ENCODE measurements at regions of chr7 and their contacts with region 1.

Region 1: DNA sequence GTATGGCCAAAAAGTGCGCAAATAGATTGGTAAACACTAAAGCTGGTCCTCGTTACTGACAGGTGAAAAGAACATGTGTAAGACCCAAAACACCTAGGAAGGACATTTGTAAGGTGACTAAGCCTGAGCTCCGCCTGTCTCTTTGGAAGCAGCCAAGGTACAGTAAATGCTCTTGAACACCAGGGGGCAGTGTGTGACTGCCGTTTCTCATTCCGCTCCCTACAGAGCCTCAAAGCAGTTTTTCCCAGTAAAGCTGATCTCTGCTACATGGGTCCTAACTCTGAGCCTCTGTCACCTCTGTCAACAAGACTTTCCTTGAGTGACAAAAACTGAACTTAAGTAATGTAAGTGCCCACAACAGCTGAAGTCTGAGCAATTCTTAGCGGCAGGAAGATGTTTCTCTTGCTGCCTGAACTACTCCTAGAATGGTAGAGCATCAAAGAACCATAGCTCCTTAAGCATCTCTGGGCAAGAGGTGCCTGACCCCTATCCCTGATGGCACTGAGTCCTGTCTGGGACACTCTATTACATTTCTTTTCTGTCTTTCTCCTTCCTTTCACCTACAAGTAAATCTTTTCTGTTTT is 238.0 kb upstream of the INHBA start:
- DNase-seq: peak; percentile 73
- H3K4me3 ChIP-seq: no peak overlapping the region
- H3K27ac ChIP-seq: no peak overlapping the region
- H3K4me1 ChIP-seq: peaks cover 0 to 3% of the 10 kb centered on the region in 2 experiments; a peak in 1 of 4 replicates
- H3K27me3 ChIP-seq: no peaks in the 10 kb centered on the region
- CTCF ChIP-seq: peak; percentile 99
- EP300 ChIP-seq: no peak
- RAD21 ChIP-seq: peak; percentile 82

Region 2: GRCh38 chr7:41916450-41916959 is 24.3 kb before region 1 on chr7:
- CTCF ChIA-PET with region 1: interaction called, 20 read pairs
- POLR2A ChIA-PET with region 1: no interaction called
- DNase-seq: no peak
- H3K4me3 ChIP-seq: no peak overlapping the region
- H3K27ac ChIP-seq: peak overlapping the region; percentile 92 to 98
- H3K4me1 ChIP-seq: peaks cover 6 to 49% of the 10 kb centered on the region in 2 experiments
- H3K27me3 ChIP-seq: no peaks in the 10 kb centered on the region
- CTCF ChIP-seq: no peak
- EP300 ChIP-seq: peak; percentile 79 to 100
- RAD21 ChIP-seq: no peak

Region 3: DNA sequence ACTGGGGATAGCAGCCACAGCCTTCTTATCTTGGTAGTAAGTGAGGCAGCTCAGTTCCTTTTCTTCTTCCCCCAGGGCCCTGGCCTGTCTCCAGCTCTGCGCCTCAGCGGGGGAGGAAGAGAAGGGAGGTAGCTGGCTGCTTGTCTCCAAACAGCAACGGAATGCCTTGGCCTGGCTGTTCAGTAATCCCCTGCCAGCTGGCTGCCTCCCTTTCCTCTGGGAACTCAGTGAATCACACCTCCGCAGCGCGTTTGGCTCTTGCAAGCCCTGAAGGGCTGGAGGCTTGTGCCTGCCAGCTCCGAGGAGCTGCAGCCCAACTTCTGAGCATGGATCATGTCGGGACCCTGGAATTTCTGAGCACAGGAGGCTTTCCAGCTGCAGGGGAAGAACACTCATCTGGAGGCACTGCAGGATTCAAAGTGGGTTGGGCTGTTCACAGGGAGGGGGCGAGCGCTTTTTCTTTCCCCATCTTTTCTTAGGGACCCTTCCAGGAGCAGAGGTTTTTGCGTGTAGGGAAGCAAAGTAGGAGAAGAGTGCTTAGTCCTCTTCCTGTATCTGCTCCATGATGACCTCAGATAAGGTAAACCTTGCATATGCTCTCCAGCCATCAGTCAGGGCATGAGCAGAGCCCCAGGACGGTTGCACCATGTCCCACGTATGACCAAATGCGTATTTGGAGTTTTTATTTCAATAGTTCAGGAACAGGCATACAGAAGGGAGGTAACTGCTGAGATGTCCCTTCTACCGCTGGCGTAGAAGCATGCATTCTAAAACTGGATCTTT is 15.2 kb after region 1 on chr7:
- CTCF ChIA-PET with region 1: interaction called, 83 read pairs
- POLR2A ChIA-PET with region 1: no interaction called
- DNase-seq: no peak
- H3K4me3 ChIP-seq: no peak overlapping the region; a peak in 1 of 4 replicates
- H3K27ac ChIP-seq: peak overlapping the region in 1 of 2 experiments; percentile 50; a peak in 2 of 4 replicates
- H3K4me1 ChIP-seq: peaks cover 0 to 21% of the 10 kb centered on the region in 2 experiments
- H3K27me3 ChIP-seq: peaks cover 7% of the 10 kb centered on the region; the same call in 1 of the 2 replicates
- CTCF ChIP-seq: no peak
- EP300 ChIP-seq: peak in 1 of 2 experiments; percentile 90; a peak in 2 of 4 replicates
- RAD21 ChIP-seq: no peak

Region 4: GRCh38 chr7:42014625-42015546 is 74.0 kb after region 1 on chr7:
- CTCF ChIA-PET with region 1: interaction called, 11 read pairs
- POLR2A ChIA-PET with region 1: no interaction called
- DNase-seq: peak; percentile 38
- H3K4me3 ChIP-seq: 0 out of 4 replicates have a peak overlapping the region, but pooled peaks of 1 of the 2 experiments have one; percentile 22
- H3K27ac ChIP-seq: no peak overlapping the region
- H3K4me1 ChIP-seq: peaks cover 0 to 7% of the 10 kb centered on the region in 2 experiments; a peak in 2 of 4 replicates
- H3K27me3 ChIP-seq: peaks cover 73% of the 10 kb centered on the region
- CTCF ChIP-seq: peak; percentile 74
- EP300 ChIP-seq: no peak
- RAD21 ChIP-seq: peak; percentile 49; the same call in 1 of the 2 replicates

Region 5: GRCh38 chr7:42843205-42843800 is 902.5 kb after region 1 on chr7:
- CTCF ChIA-PET with region 1: interaction called, 80 read pairs
- POLR2A ChIA-PET with region 1: no interaction called
- DNase-seq: peak; percentile 67
- H3K4me3 ChIP-seq: 0 out of 4 replicates have a peak overlapping the region, but pooled peaks of 1 of the 2 experiments have one; percentile 44
- H3K27ac ChIP-seq: no peak overlapping the region
- H3K4me1 ChIP-seq: no peaks in the 10 kb centered on the region
- H3K27me3 ChIP-seq: peaks cover 32% of the 10 kb centered on the region; the same call in 1 of the 2 replicates
- CTCF ChIP-seq: peak; percentile 68
- EP300 ChIP-seq: no peak
- RAD21 ChIP-seq: peak; percentile 83

Region 6: GRCh38 chr7:42886129-42886528 is 945.3 kb after region 1 on chr7:
- CTCF ChIA-PET with region 1: interaction called, 12 read pairs
- POLR2A ChIA-PET with region 1: no interaction called
- DNase-seq: peak; percentile 41
- H3K4me3 ChIP-seq: no peak overlapping the region
- H3K27ac ChIP-seq: no peak overlapping the region
- H3K4me1 ChIP-seq: peaks cover 0 to 11% of the 10 kb centered on the region in 2 experiments; a peak in 2 of 4 replicates
- H3K27me3 ChIP-seq: no peaks in the 10 kb centered on the region
- CTCF ChIP-seq: peak; percentile 66
- EP300 ChIP-seq: no peak
- RAD21 ChIP-seq: peak; percentile 45; the same call in 1 of the 2 replicates

Measured in SK-N-SH (cell line).